ENCODE measurements at regions of chr6 and their contacts with region 1.

Region 1: DNA sequence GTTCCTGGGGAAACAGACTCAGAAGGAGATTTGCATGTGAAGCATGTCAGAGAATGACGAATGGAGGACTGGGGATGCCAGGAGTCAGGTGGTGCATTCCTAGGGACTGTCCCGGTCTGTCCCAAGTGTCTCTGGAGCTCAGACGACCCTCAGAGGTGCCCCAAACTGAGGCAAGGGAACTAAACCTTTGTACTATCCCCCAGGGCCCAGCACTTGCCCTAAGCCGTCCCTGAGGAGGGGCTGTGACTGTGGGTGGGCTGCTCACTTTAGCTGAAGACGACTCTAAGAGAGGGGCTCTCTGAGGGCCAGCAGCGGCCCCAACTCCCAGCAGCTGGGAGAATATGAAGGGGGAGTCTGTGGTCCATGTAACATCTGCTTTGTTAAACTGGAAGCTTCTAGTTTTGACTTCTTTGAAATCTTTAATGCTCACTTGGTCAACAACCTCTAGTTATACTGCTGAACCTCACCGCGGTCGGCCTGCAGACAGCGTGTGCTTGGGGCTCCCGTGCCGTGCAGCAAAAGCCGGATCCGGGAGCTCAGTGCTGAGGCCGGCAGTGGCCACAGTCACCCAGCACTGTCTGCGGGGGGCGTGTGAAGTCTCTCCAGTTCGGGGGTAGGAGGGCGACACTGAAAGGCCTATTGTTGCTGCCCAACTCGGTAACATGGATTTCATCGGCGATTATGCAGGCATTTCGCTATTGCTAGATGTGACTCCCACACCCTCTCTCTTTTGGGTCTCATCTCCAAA is 34.2 kb downstream of the TUBB2B start:
- DNase-seq: no peak
- ATAC-seq: no peak
- H3K4me3 ChIP-seq: no peak overlapping the region
- H3K27ac ChIP-seq: no peak overlapping the region
- H3K4me1 ChIP-seq: no peaks in the 10 kb centered on the region
- H3K27me3 ChIP-seq: no peaks in the 10 kb centered on the region
- CTCF ChIP-seq: no peak

Region 2: DNA sequence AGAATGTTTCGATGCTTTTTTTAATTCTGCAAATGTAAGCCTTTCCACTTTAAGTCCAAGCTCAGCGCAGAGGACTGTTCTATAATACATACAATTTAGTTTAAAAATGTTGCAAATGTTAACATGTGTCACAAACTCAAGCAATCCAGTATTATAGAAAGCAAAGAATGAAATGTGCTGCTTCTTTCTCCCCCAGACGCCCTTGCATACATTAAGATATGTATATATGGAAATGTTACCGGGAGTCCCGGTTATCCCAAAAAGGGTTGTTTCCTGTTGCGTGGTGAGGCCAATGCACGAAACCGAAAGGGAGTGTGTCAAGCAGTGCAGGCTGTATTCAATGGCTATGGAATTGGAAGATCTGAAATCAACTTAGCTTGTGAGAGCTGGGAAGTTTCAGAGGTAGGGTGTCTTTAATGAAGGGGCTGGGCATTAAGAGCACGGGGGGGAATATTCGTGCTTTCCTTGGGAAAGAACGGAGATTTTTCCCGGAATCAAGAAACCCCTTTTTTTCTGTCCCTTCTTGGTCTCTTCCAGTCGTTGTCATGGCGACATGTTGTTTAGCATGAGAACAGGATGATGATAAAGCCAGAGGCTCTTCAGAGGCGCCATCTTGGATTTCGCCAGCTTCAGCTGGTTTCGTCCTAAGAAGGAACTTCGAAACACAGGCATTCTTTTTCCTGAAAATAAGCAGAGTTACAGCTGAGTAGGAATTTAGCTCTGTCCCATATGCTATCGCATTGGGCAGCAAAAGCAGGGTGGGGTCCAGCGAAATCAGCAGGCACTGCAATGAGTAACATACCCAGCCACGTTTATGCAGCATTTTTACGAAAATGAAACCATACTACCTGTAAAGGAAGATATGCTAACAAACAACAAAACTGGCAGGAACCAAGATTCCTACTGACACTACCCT is 203.7 kb before region 1 on chr6:
- CTCF ChIA-PET with region 1: no interaction called
- POLR2A ChIA-PET with region 1: no interaction called
- in situ Hi-C with region 1: no loop called
- intact Hi-C with region 1: no loop called
- DNase-seq: peak; percentile 92
- ATAC-seq: peak; percentile 83
- H3K4me3 ChIP-seq: peak overlapping the region; percentile 77 to 82
- H3K27ac ChIP-seq: peak overlapping the region; percentile 98
- H3K4me1 ChIP-seq: peaks cover 11% of the 10 kb centered on the region
- H3K27me3 ChIP-seq: no peaks in the 10 kb centered on the region
- CTCF ChIP-seq: peak; percentile 12; the same call in 1 of the 2 replicates

Region 3: DNA sequence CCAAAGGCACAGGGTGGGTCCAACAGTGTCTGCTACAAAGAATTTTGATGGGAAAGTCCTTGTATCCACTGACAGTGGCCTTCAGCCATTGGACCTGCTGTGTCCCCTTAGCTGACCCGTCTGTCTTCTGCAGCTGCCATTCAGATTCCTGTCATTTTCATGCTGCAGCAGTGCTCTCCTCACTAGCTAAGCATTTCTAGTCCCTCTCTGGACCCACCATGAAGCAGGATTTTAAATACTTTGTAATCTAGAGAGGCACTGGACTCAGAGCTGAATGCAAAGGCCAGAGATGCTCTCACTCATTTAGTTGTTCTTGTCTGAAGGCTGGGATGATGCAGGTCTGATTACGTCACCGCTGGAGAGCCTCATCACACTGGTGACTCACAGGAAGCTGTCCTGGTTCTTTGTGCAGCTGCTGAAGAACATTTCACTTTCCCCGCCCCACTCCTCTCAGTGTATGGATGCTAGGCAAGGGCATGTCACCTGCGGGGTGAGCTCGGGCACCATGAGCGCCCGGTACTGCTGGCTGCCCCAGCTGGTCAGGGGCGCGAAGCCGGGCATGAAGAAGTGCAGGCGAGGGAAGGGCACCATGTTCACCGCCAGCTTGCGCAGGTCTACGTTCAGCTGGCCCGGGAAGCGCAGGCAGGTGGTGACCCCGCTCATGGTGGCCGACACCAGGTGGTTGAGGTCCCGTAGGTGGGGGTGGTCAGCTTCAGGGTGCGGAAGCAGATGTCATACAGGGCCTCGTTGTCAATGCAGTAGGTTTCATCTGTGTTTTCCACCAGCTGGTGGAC is 16.5 kb before region 1 on chr6:
- CTCF ChIA-PET with region 1: interaction called, 4 read pairs
- POLR2A ChIA-PET with region 1: interaction called, 12 read pairs
- in situ Hi-C with region 1: no loop called
- intact Hi-C with region 1: no loop called
- DNase-seq: peak; percentile 71
- ATAC-seq: peak; percentile 58
- H3K4me3 ChIP-seq: no peak overlapping the region
- H3K27ac ChIP-seq: no peak overlapping the region
- H3K4me1 ChIP-seq: no peaks in the 10 kb centered on the region
- H3K27me3 ChIP-seq: no peaks in the 10 kb centered on the region; the same call in 1 of the 2 replicates
- CTCF ChIP-seq: no peak